Activated naive CD4-positive, alpha-beta T cell treated with anti-CD3 and anti-CD28 coated beads for 36 hours (primary cell): ENCODE measurements at regions of chr6 and their contacts with region 1.

Region 1: GRCh38 chr6:95577304-95578105 is at the start of gene MANEA:
- DNase-seq: peak; percentile 80
- H3K4me3 Mint-ChIP-seq: peak within 1 kb of the TSS; percentile 96
- H3K27ac Mint-ChIP-seq: peak within 1 kb of the TSS; percentile 98
- H3K4me1 Mint-ChIP-seq: peaks cover 36% of the 10 kb centered on the region
- H3K27me3 Mint-ChIP-seq: no peaks in the 10 kb centered on the region
- total RNA-seq, gene MANEA: 14.0 to 16.0 TPM

Region 2: DNA sequence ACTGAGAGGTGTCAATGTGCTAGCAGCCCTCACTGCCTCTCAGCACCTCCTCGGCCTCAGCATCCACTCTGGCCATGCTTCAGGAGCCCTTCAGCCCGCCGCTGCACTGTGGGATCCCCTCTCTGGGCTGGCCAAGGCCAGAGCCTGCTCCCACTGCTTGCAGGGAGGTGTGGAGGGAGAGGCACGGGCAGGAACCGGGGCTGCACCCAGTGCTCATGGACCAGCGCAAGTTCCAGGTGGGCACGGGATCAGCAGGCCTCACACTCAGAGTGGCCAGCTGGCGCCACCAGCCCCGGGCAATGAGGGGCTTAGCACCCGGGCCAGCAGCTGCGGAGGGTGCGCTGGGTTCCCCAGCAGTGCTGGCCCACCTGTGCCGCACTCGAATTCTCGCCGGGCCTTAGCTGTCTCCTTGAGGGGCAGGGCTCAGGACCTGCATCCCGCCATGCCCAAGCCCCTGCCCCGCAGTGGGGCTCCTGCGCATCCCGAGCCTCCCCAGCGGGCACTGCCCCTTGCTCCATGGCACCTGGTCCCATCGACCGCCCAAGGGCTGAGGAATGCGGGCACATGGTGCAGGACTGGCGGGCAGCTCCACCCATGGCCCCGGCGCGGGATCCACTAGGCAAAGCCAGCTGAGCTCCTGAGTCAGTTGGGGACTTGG is 80.6 kb before region 1 on chr6:
- CTCF ChIA-PET with region 1: no interaction called
- intact Hi-C with region 1: no loop called
- DNase-seq: no peak
- H3K4me3 Mint-ChIP-seq: no peak overlapping the region
- H3K27ac Mint-ChIP-seq: no peak overlapping the region
- H3K4me1 Mint-ChIP-seq: no peaks in the 10 kb centered on the region
- H3K27me3 Mint-ChIP-seq: peaks cover 5% of the 10 kb centered on the region

Region 3: DNA sequence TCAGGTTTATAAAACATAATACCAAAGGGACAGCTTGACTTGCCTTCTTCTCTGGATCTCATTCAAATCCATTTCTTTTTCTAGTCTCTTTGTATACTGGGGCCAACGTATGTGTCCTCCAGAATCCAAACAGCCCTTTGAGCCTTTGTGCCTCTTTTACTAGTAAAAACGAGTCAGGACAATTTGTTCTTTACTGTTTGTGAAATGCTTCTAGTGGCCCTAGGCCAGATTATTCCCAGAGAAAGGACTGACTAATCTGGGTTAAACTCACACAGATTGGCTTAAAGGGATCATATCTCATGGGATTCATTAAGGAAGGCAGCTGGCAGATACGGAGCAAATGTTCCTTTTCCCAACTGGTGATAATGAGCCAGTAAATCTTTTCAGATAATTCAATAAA is 32.3 kb before region 1 on chr6:
- CTCF ChIA-PET with region 1: no interaction called
- intact Hi-C with region 1: no loop called
- DNase-seq: no peak
- H3K4me3 Mint-ChIP-seq: no peak overlapping the region
- H3K27ac Mint-ChIP-seq: no peak overlapping the region
- H3K4me1 Mint-ChIP-seq: no peaks in the 10 kb centered on the region
- H3K27me3 Mint-ChIP-seq: peaks cover under 1% of the 10 kb centered on the region

Region 4: DNA sequence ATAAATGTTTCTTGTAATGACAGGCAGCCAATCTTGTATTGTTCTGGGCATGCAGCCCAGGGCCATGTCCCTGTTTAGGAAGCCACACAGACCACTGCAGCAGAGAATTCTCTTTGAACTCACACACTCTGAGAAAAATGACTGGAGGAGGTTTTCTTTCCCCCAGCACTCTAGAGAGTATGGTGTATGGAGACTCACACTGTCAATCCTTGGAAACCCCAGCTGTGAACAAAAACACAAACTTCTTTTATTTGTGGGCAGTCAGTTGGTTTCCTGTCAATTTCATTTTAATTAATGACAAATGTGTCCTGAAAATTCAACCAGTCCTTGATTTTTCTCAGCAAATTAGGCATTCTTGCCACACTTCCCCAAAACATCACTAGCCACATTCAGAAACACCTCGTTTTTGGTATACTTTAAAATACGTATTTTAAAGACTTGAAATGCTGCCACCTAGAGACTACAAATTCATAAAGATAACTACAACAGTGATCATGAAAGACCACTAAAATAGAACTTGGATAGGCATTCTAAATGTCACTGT is 891.2 kb after region 1 on chr6:
- CTCF ChIA-PET with region 1: no interaction called
- intact Hi-C with region 1: no loop called
- DNase-seq: no peak
- H3K4me3 Mint-ChIP-seq: no peak overlapping the region
- H3K27ac Mint-ChIP-seq: no peak overlapping the region
- H3K4me1 Mint-ChIP-seq: peaks cover 10% of the 10 kb centered on the region
- H3K27me3 Mint-ChIP-seq: peaks cover 4% of the 10 kb centered on the region

Region 5: GRCh38 chr6:96521644-96522464 is 944.3 kb after region 1 on chr6 and contains the start of gene UFL1:
- CTCF ChIA-PET with region 1: no interaction called
- intact Hi-C with region 1: loop called (anchors 1 kb)
- DNase-seq: peak; percentile 92
- H3K4me3 Mint-ChIP-seq: peak within 1 kb of the TSS; percentile 98
- H3K27ac Mint-ChIP-seq: peak within 1 kb of the TSS; percentile 99
- H3K4me1 Mint-ChIP-seq: peaks cover 13% of the 10 kb centered on the region
- H3K27me3 Mint-ChIP-seq: no peaks in the 10 kb centered on the region
- total RNA-seq, gene UFL1: 28.3 to 28.7 TPM